Right lobe of liver (tissue), 6 donors: ENCODE measurements at regions of chr12 and their contacts with region 1.

Region 1: GRCh38 chr12:9198012-9198411 is 10.2 kb downstream of the PZP start:
- DNase-seq: no peak
- ATAC-seq: no peak
- H3K4me3 ChIP-seq: no peak overlapping the region
- H3K27ac ChIP-seq: no peak overlapping the region
- H3K4me1 ChIP-seq: no peaks in the 10 kb centered on the region
- H3K27me3 ChIP-seq: no peaks in the 10 kb centered on the region
- CTCF ChIP-seq: no peak
- POLR2A ChIP-seq: no peak

Region 2: DNA sequence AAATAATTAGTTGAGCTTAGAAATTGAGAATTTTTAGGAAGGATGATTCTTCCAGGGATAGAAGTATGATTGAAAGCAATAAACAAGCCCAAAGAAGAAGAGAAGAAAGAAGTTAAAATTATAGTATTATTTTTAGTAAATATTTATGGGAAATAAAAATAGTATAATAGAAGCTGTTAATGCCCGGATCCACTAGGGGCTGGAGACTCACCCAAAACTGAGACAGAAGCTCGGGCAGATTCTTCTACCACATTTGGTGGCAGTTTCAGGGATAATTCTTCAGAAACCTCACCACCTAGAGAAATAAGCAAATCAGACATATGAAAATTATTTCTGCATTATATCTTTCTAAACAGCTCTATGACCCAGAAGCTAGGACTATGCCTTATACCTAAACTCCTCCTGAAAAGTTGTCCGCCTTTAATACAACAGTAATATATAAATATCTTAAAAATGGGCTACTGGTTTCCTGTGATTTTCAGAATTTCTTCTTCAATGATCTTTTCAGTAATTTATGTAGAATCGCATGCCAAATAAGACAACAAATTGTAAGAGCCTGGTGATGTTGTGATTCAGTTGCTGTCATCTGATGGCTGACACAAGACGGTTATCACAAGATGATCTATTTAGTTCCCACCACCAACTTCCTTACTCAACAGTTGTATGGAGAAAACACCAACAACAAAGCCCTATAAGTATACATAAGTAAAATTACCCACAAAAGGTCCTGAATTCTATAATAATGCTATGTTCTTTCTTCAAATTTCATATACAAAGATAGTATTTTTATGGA is 117.9 kb before region 1 on chr12:
- intact Hi-C with region 1: loop called in 1 of 2 experiments (anchors 10 kb)
- DNase-seq: no peak
- ATAC-seq: no peak
- H3K4me3 ChIP-seq: no peak overlapping the region
- H3K27ac ChIP-seq: no peak overlapping the region
- H3K4me1 ChIP-seq: peaks cover 0 to 27% (median 2%) of the 10 kb centered on the region in 4 donors
- H3K27me3 ChIP-seq: no peaks in the 10 kb centered on the region
- CTCF ChIP-seq: no peak
- POLR2A ChIP-seq: peak; percentile 21